ENCODE measurements at regions of chr20 and their contacts with region 1.

Region 1: GRCh38 chr20:9978397-9979004 is 56.3 kb upstream of the ANKEF1 start:
- DNase-seq: peak; percentile 57
- H3K4me3 Mint-ChIP-seq: no peak overlapping the region
- H3K27ac Mint-ChIP-seq: no peak overlapping the region
- H3K4me1 Mint-ChIP-seq: peaks cover 2% of the 10 kb centered on the region
- H3K27me3 Mint-ChIP-seq: peaks cover 2% of the 10 kb centered on the region

Region 2: DNA sequence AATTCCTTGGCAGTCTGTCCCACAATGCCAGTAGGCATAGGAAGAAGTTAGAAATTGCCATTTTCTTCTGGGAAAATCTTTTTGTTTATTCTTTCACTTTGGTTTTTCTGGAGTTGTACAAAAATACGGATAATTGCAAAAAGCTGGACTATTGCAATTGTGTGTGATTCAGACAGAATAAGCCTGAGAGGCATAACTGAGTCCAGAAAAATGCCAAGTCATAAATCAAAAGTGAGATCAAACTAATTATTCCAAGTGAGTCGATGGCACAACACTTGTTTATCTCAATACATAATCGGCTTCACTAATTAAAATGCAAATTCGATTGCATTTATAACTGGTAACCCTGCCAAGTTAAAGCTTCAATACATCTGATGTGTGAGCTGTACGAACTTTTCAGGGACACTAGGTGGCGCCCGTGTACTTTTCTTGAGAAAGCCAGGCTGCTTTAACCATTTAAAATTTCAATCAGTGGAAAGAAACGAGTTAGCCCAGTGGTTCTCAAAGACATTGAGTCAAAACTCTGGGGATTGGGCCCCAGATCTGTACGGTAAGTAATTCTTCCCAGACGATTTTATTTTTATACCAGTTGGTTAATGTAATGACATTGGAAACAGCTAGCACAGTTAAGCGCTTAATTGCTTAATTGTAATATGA is 361.5 kb before region 1 on chr20:
- CTCF ChIA-PET with region 1: interaction called, 3 read pairs
- intact Hi-C with region 1: loop called (anchors 2 kb)
- DNase-seq: peak; percentile 66
- H3K4me3 Mint-ChIP-seq: no peak overlapping the region
- H3K27ac Mint-ChIP-seq: no peak overlapping the region
- H3K4me1 Mint-ChIP-seq: no peaks in the 10 kb centered on the region
- H3K27me3 Mint-ChIP-seq: peaks cover 27% of the 10 kb centered on the region

Region 3: GRCh38 chr20:10002866-10003265 is 24.4 kb after region 1 on chr20:
- CTCF ChIA-PET with region 1: no interaction called
- intact Hi-C with region 1: no loop called
- DNase-seq: no peak
- H3K4me3 Mint-ChIP-seq: no peak overlapping the region
- H3K27ac Mint-ChIP-seq: no peak overlapping the region
- H3K4me1 Mint-ChIP-seq: no peaks in the 10 kb centered on the region
- H3K27me3 Mint-ChIP-seq: no peaks in the 10 kb centered on the region

Region 4: GRCh38 chr20:10219452-10219791 is 240.9 kb after region 1 on chr20:
- CTCF ChIA-PET with region 1: no interaction called
- intact Hi-C with region 1: loop called (anchors 10 kb)
- DNase-seq: peak; percentile 67
- H3K4me3 Mint-ChIP-seq: no peak overlapping the region
- H3K27ac Mint-ChIP-seq: no peak overlapping the region
- H3K4me1 Mint-ChIP-seq: peaks cover 13% of the 10 kb centered on the region
- H3K27me3 Mint-ChIP-seq: peaks cover 40% of the 10 kb centered on the region

Region 5: GRCh38 chr20:10381493-10381892 is 403.0 kb after region 1 on chr20:
- CTCF ChIA-PET with region 1: interaction called, 3 read pairs
- intact Hi-C with region 1: loop called (anchors 1 kb)
- DNase-seq: no peak
- H3K4me3 Mint-ChIP-seq: no peak overlapping the region
- H3K27ac Mint-ChIP-seq: no peak overlapping the region
- H3K4me1 Mint-ChIP-seq: no peaks in the 10 kb centered on the region
- H3K27me3 Mint-ChIP-seq: peaks cover 11% of the 10 kb centered on the region

Region 6: GRCh38 chr20:10553326-10553984 is 575.0 kb after region 1 on chr20:
- CTCF ChIA-PET with region 1: no interaction called
- intact Hi-C with region 1: loop called (anchors 2 kb)
- DNase-seq: peak; percentile 74
- H3K4me3 Mint-ChIP-seq: no peak overlapping the region
- H3K27ac Mint-ChIP-seq: no peak overlapping the region
- H3K4me1 Mint-ChIP-seq: peaks cover 37% of the 10 kb centered on the region
- H3K27me3 Mint-ChIP-seq: no peaks in the 10 kb centered on the region

Region 7: GRCh38 chr20:11544029-11544678 is 1565.7 kb after region 1 on chr20:
- CTCF ChIA-PET with region 1: interaction called, 6 read pairs
- intact Hi-C with region 1: loop called (anchors 1 kb)
- DNase-seq: peak; percentile 35
- H3K4me3 Mint-ChIP-seq: no peak overlapping the region
- H3K27ac Mint-ChIP-seq: no peak overlapping the region
- H3K4me1 Mint-ChIP-seq: no peaks in the 10 kb centered on the region
- H3K27me3 Mint-ChIP-seq: peaks cover 4% of the 10 kb centered on the region

Measured in activated naive CD4-positive, alpha-beta T cell treated with anti-CD3 and anti-CD28 coated beads for 36 hours (primary cell).